Gastrocnemius medialis (tissue), 4 donors: ENCODE measurements at regions of chr17 and their contacts with region 1.

Region 1: GRCh38 chr17:40952661-40953060 is 14.1 kb downstream of the KRT39 start:
- DNase-seq: no peak
- ATAC-seq: peak; percentile 56 to 73
- H3K4me3 ChIP-seq: no peak overlapping the region
- H3K27ac ChIP-seq: peak overlapping the region in 3 of 4 donors; percentile 25 to 52 (median 46)
- H3K4me1 ChIP-seq: peaks cover 13 to 14% of the 10 kb centered on the region in 2 donors
- H3K27me3 ChIP-seq: peaks cover 3 to 15% (median 8%) of the 10 kb centered on the region in 3 donors
- CTCF ChIP-seq: no peak
- POLR2A ChIP-seq: no peak

Region 2: GRCh38 chr17:40980596-40980995 is 27.9 kb after region 1 on chr17:
- in situ Hi-C with region 1: no loop called
- intact Hi-C with region 1: loop called (anchors 2 kb)
- DNase-seq: peak; percentile 19 to 25
- ATAC-seq: peak; percentile 73 to 95
- H3K4me3 ChIP-seq: no peak overlapping the region
- H3K27ac ChIP-seq: peak overlapping the region in 1 of 4 donors; percentile 58
- H3K4me1 ChIP-seq: peaks cover 0 to 5% of the 10 kb centered on the region in 2 donors
- H3K27me3 ChIP-seq: no peaks in the 10 kb centered on the region
- CTCF ChIP-seq: no peak
- POLR2A ChIP-seq: no peak